Esophagus muscularis mucosa (tissue), 4 donors: ENCODE measurements at regions of chr15 and their contacts with region 1.

Region 1: GRCh38 chr15:49145651-49146609 is 9.5 kb downstream of the COPS2 start:
- DNase-seq: no peak
- H3K4me3 ChIP-seq: no peak overlapping the region
- H3K27ac ChIP-seq: no peak overlapping the region
- H3K4me1 ChIP-seq: peaks cover 15 to 56% (median 53%) of the 10 kb centered on the region in 4 donors
- H3K27me3 ChIP-seq: no peaks in the 10 kb centered on the region
- CTCF ChIP-seq: peak; percentile 46 to 73 (median 63)
- EP300 ChIP-seq: no peak
- POLR2A ChIP-seq: no peak

Region 2: GRCh38 chr15:48861813-48862431 is 284.0 kb before region 1 on chr15:
- intact Hi-C with region 1: loop called (anchors 5 kb)
- DNase-seq: no peak
- H3K4me3 ChIP-seq: no peak overlapping the region
- H3K27ac ChIP-seq: no peak overlapping the region
- H3K4me1 ChIP-seq: peaks cover 0 to 20% (median 15%) of the 10 kb centered on the region in 4 donors
- H3K27me3 ChIP-seq: no peaks in the 10 kb centered on the region
- CTCF ChIP-seq: peak; percentile 86 to 89 (median 88)
- EP300 ChIP-seq: no peak
- POLR2A ChIP-seq: no peak

Region 3: GRCh38 chr15:49370782-49371181 is 224.9 kb after region 1 on chr15:
- intact Hi-C with region 1: no loop called
- DNase-seq: no peak
- H3K4me3 ChIP-seq: no peak overlapping the region
- H3K27ac ChIP-seq: no peak overlapping the region
- H3K4me1 ChIP-seq: no peaks in the 10 kb centered on the region
- H3K27me3 ChIP-seq: no peaks in the 10 kb centered on the region
- CTCF ChIP-seq: peak in 2 of 3 experiments; percentile 9 to 20
- EP300 ChIP-seq: no peak
- POLR2A ChIP-seq: no peak